ENCODE measurements at regions of chr14 and their contacts with region 1.

Region 1: DNA sequence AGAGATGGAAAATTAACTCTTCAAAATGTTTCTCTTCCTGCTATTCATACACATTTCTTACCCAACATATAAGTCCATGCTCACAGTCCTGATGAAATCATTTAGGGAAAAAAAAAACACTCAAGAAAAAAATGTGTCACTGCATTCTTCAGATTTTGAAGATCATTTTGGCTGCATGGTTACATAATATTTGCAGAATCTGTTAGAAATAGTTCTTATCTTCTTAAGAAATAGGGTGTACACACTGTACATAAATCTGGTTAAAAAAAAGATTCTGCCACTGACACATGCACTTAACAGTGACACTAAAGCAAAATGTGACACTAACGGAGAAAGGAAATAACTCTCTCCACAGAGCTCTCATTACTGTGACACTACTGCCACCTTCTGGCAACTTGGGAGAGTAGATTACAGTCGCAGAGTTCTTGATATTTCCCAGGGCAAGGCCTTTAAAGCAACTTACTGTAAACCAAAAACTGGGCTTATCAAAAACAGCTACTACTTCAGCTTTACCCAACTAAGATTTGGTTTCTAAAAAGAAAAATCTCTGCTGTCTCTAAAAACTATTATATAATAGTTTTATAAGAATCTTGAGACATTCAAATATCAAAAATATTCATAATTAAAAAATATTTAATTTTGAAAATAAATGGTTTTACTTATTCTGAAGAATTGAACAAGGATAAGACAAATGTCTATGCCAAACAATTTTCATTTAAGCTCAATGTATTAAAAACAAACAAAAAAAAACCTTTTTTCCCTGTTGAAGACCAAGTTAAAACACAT is 65.0 kb downstream of the SETD3 start:
- DNase-seq: peak; percentile 55
- ATAC-seq: peak; percentile 97
- H3K4me3 ChIP-seq: no peak overlapping the region
- H3K27ac ChIP-seq: no peak overlapping the region
- H3K4me1 ChIP-seq: peaks cover 5% of the 10 kb centered on the region; the same call in 1 of the 2 replicates
- H3K27me3 ChIP-seq: no peaks in the 10 kb centered on the region
- CTCF ChIP-seq: peak; percentile 75 to 86 (median 79)
- EP300 ChIP-seq: no peak
- POLR2A ChIP-seq: no peak
- RAD21 ChIP-seq: peak; percentile 91

Region 2: DNA sequence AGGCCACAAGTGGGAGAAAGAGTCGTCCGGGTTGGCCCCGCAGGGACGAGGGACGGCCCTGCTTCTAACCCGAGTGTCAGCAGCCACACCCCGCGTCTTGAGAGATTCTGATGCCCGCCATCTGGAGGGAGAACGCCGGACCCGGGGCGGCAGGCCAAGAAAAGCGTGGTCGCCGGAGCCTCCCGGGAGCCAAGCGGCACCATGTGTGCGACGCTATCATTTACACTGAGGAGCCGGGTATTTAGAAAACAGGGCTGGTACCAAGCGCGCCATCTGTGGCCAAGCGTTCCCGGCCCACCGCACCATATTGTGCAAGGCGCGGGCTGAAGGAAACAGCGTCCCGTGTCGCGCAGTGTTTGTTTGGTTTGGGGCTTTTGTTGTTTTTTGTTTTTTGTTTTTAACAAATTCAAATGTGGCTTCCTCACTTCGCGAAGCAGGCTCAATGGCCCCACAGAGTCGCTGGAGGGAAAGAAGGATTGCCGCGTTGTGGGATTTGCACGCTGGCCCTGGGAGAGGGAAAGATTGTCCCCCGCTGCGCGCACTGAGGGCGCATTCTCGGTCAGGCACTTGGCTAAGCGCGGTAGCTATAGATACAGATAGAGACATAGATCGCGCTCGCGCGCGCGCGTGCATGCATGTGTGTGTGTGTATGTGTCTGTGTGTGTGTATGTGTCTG is 297.5 kb before region 1 on chr14:
- CTCF ChIA-PET with region 1: no interaction called
- POLR2A ChIA-PET with region 1: no interaction called
- RAD21 ChIA-PET with region 1: no interaction called
- SMC1A ChIA-PET with region 1: no interaction called
- in situ Hi-C with region 1: no loop called
- intact Hi-C with region 1: no loop called
- DNase-seq: no peak
- ATAC-seq: no peak
- H3K4me3 ChIP-seq: no peak overlapping the region
- H3K27ac ChIP-seq: no peak overlapping the region
- H3K4me1 ChIP-seq: no peaks in the 10 kb centered on the region
- H3K27me3 ChIP-seq: no peaks in the 10 kb centered on the region
- CTCF ChIP-seq: no peak
- EP300 ChIP-seq: no peak
- POLR2A ChIP-seq: no peak
- RAD21 ChIP-seq: no peak

Region 3: GRCh38 chr14:99320105-99320572 is 95.5 kb before region 1 on chr14:
- CTCF ChIA-PET with region 1: interaction called, 27 read pairs
- POLR2A ChIA-PET with region 1: no interaction called
- RAD21 ChIA-PET with region 1: interaction called, 11 read pairs
- SMC1A ChIA-PET with region 1: interaction called, 12 read pairs
- in situ Hi-C with region 1: no loop called
- intact Hi-C with region 1: loop called (anchors 2 kb)
- DNase-seq: peak; percentile 39
- ATAC-seq: peak; percentile 92
- H3K4me3 ChIP-seq: no peak overlapping the region
- H3K27ac ChIP-seq: no peak overlapping the region
- H3K4me1 ChIP-seq: peaks cover 6% of the 10 kb centered on the region
- H3K27me3 ChIP-seq: no peaks in the 10 kb centered on the region
- CTCF ChIP-seq: peak; percentile 79 to 92 (median 88)
- EP300 ChIP-seq: no peak
- POLR2A ChIP-seq: no peak
- RAD21 ChIP-seq: peak; percentile 33

Region 4: GRCh38 chr14:99401621-99402284 is 13.9 kb before region 1 on chr14:
- CTCF ChIA-PET with region 1: interaction called, 233 read pairs
- POLR2A ChIA-PET with region 1: no interaction called
- RAD21 ChIA-PET with region 1: interaction called, 4 read pairs
- SMC1A ChIA-PET with region 1: interaction called, 5 read pairs
- in situ Hi-C with region 1: no loop called
- intact Hi-C with region 1: no loop called
- DNase-seq: no peak
- ATAC-seq: no peak
- H3K4me3 ChIP-seq: no peak overlapping the region
- H3K27ac ChIP-seq: no peak overlapping the region
- H3K4me1 ChIP-seq: peaks cover 3% of the 10 kb centered on the region; the same call in 1 of the 2 replicates
- H3K27me3 ChIP-seq: no peaks in the 10 kb centered on the region
- CTCF ChIP-seq: no peak
- EP300 ChIP-seq: no peak
- POLR2A ChIP-seq: no peak
- RAD21 ChIP-seq: no peak

Region 5: GRCh38 chr14:99524804-99525698 is 109.4 kb after region 1 on chr14:
- CTCF ChIA-PET with region 1: no interaction called
- POLR2A ChIA-PET with region 1: no interaction called
- RAD21 ChIA-PET with region 1: no interaction called
- SMC1A ChIA-PET with region 1: no interaction called
- in situ Hi-C with region 1: no loop called
- intact Hi-C with region 1: no loop called
- DNase-seq: no peak
- ATAC-seq: peak; percentile 47
- H3K4me3 ChIP-seq: no peak overlapping the region
- H3K27ac ChIP-seq: no peak overlapping the region
- H3K4me1 ChIP-seq: no peaks in the 10 kb centered on the region
- H3K27me3 ChIP-seq: no peaks in the 10 kb centered on the region
- CTCF ChIP-seq: peak in 2 of 3 experiments; percentile 18 to 22; a peak in 1 of 6 replicates
- EP300 ChIP-seq: no peak
- POLR2A ChIP-seq: no peak
- RAD21 ChIP-seq: no peak

Region 6: GRCh38 chr14:99664058-99664936 is 248.6 kb after region 1 on chr14:
- CTCF ChIA-PET with region 1: no interaction called
- POLR2A ChIA-PET with region 1: no interaction called
- RAD21 ChIA-PET with region 1: no interaction called
- SMC1A ChIA-PET with region 1: no interaction called
- in situ Hi-C with region 1: no loop called
- intact Hi-C with region 1: no loop called
- DNase-seq: no peak
- ATAC-seq: peak; percentile 47
- H3K4me3 ChIP-seq: no peak overlapping the region
- H3K27ac ChIP-seq: no peak overlapping the region
- H3K4me1 ChIP-seq: peaks cover 14% of the 10 kb centered on the region
- H3K27me3 ChIP-seq: peaks cover 1 to 3% of the 10 kb centered on the region in 2 experiments; a peak in 2 of 4 replicates
- CTCF ChIP-seq: no peak
- EP300 ChIP-seq: no peak
- POLR2A ChIP-seq: no peak
- RAD21 ChIP-seq: no peak